Right ventricle myocardium inferior (tissue), 1 donor: ENCODE measurements at regions of chr7 and their contacts with region 1.

Region 1: DNA sequence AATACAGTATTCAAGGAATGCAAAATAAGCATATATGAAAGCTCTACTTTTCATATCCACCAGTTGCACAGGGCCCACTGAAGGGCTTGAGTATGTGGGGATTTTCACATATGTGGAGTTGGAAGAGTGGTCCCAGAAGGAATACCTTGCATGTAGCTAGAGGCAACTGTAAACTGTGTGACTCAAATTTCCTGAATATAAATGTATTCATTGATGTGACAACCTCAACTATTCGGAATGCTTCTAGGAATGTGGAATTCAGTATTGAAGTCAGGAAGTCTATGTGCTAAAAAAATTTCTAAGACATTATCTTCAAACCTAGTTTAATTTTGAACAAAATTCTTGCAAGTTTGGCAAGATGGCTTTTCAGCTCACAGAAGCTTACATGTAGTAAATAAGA is 695.5 kb upstream of the SEMA3D start:
- DNase-seq: no peak
- ATAC-seq: no peak

Region 2: GRCh38 chr7:85840554-85840953 is 41.8 kb before region 1 on chr7:
- intact Hi-C with region 1: no loop called
- DNase-seq: no peak
- ATAC-seq: no peak

Region 3: GRCh38 chr7:86904949-86905834 is 1022.9 kb after region 1 on chr7:
- intact Hi-C with region 1: loop called (anchors 10 kb)
- DNase-seq: no peak
- ATAC-seq: no peak